Naive thymus-derived CD4-positive, alpha-beta T cell (primary cell): ENCODE measurements at regions of chr10 and their contacts with region 1.

Region 1: GRCh38 chr10:77641788-77642397 is 4.3 kb upstream of the KCNMA1 start:
- DNase-seq: peak in 8 of 9 donors; percentile 3 to 45 (median 28)
- ATAC-seq: no peak
- H3K4me3 ChIP-seq: no peak overlapping the region
- H3K4me3 Mint-ChIP-seq: no peak overlapping the region
- H3K27ac ChIP-seq: no peak overlapping the region
- H3K27ac Mint-ChIP-seq: no peak overlapping the region
- H3K4me1 ChIP-seq: peaks cover 0 to 4% of the 10 kb centered on the region in 2 donors
- H3K4me1 Mint-ChIP-seq: peaks cover 0 to 17% (median 8%) of the 10 kb centered on the region in 7 donors
- H3K27me3 ChIP-seq: peaks cover 0 to 5% of the 10 kb centered on the region in 2 donors
- H3K27me3 Mint-ChIP-seq: peaks cover 34 to 51% (median 45%) of the 10 kb centered on the region in 5 donors

Region 2: GRCh38 chr10:77165445-77166208 is 476.3 kb before region 1 on chr10:
- CTCF ChIA-PET with region 1: interaction called, 4 read pairs
- POLR2A ChIA-PET with region 1: no interaction called
- intact Hi-C with region 1: loop called (anchors 1 kb)
- DNase-seq: peak in 6 of 9 donors; percentile 22 to 34 (median 28)
- ATAC-seq: peak; percentile 60
- H3K4me3 ChIP-seq: no peak overlapping the region
- H3K4me3 Mint-ChIP-seq: peak overlapping the region in 7 of 10 donors; percentile 7 to 73 (median 62)
- H3K27ac ChIP-seq: no peak overlapping the region
- H3K27ac Mint-ChIP-seq: no peak overlapping the region
- H3K4me1 ChIP-seq: no peaks in the 10 kb centered on the region
- H3K4me1 Mint-ChIP-seq: peaks cover 0 to 5% (median 3%) of the 10 kb centered on the region in 7 donors
- H3K27me3 ChIP-seq: no peaks in the 10 kb centered on the region
- H3K27me3 Mint-ChIP-seq: peaks cover 24 to 44% (median 39%) of the 10 kb centered on the region in 5 donors

Region 3: DNA sequence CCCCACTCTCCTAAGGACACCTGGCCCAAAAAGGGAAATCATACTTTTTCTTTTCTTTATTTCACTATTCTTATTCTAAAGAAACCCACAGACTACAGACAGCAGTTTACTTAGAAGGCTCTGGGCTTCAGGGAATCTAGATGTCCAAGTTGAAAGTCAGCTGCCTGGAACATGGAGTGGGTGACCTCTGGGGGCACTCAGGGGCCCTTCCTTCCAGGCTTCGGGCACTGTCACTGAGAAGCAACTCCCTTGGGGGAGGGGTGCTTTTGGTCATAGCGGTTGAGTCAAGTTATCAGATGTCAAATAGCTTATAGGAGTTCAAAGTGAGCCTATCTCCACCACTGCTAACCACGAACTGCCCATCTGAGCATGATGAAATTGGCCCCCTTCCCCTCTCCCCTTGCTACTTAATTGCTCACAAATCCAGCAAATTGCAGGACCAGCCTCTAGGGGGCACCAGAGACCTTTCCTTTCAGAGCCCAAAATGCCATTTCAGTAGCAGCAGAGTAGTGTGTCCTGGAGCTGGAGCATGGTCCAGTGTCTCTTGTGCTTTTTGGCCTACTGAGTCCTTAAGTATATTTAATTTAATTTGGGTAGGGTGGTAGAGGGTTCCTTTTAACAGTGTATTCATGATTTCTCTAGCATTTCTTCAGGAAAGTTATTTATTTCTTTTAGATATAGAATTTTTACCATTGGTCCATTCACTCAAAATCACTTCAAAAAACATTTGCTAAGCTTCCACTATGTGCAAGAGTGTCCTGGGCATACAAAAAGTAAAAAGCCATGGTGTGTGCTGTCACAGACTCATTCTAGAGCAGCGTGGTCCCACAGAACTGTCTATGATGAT is 468.1 kb before region 1 on chr10:
- CTCF ChIA-PET with region 1: interaction called, 7 read pairs
- POLR2A ChIA-PET with region 1: no interaction called
- intact Hi-C with region 1: loop called in 1 of 2 experiments (anchors 1 kb)
- DNase-seq: peak in 8 of 9 donors; percentile 19 to 50 (median 38)
- ATAC-seq: peak; percentile 68
- H3K4me3 ChIP-seq: no peak overlapping the region
- H3K4me3 Mint-ChIP-seq: no peak overlapping the region
- H3K27ac ChIP-seq: no peak overlapping the region
- H3K27ac Mint-ChIP-seq: no peak overlapping the region
- H3K4me1 ChIP-seq: no peaks in the 10 kb centered on the region
- H3K4me1 Mint-ChIP-seq: no peaks in the 10 kb centered on the region
- H3K27me3 ChIP-seq: no peaks in the 10 kb centered on the region
- H3K27me3 Mint-ChIP-seq: peaks cover 3 to 32% (median 12%) of the 10 kb centered on the region in 5 donors

Region 4: GRCh38 chr10:77251297-77252013 is 390.4 kb before region 1 on chr10:
- CTCF ChIA-PET with region 1: no interaction called
- POLR2A ChIA-PET with region 1: no interaction called
- intact Hi-C with region 1: loop called in 1 of 2 experiments (anchors 5 kb)
- DNase-seq: no peak
- ATAC-seq: no peak
- H3K4me3 ChIP-seq: no peak overlapping the region
- H3K4me3 Mint-ChIP-seq: no peak overlapping the region
- H3K27ac ChIP-seq: no peak overlapping the region
- H3K27ac Mint-ChIP-seq: no peak overlapping the region
- H3K4me1 ChIP-seq: peaks cover 0 to 6% of the 10 kb centered on the region in 2 donors
- H3K4me1 Mint-ChIP-seq: peaks cover 0 to 4% (median 0%) of the 10 kb centered on the region in 7 donors
- H3K27me3 ChIP-seq: no peaks in the 10 kb centered on the region
- H3K27me3 Mint-ChIP-seq: peaks cover 0 to 21% (median 2%) of the 10 kb centered on the region in 5 donors

Region 5: GRCh38 chr10:77391605-77392235 is 250.2 kb before region 1 on chr10:
- CTCF ChIA-PET with region 1: no interaction called
- POLR2A ChIA-PET with region 1: no interaction called
- intact Hi-C with region 1: loop called in 1 of 2 experiments (anchors 5 kb)
- DNase-seq: peak in 1 of 9 donors; percentile 34
- ATAC-seq: no peak
- H3K4me3 ChIP-seq: no peak overlapping the region
- H3K4me3 Mint-ChIP-seq: no peak overlapping the region
- H3K27ac ChIP-seq: no peak overlapping the region
- H3K27ac Mint-ChIP-seq: no peak overlapping the region
- H3K4me1 ChIP-seq: no peaks in the 10 kb centered on the region
- H3K4me1 Mint-ChIP-seq: peaks cover 0 to 3% (median 0%) of the 10 kb centered on the region in 7 donors
- H3K27me3 ChIP-seq: no peaks in the 10 kb centered on the region
- H3K27me3 Mint-ChIP-seq: peaks cover 0 to 11% (median 7%) of the 10 kb centered on the region in 5 donors

Region 6: GRCh38 chr10:77685432-77685831 is 43.5 kb after region 1 on chr10:
- CTCF ChIA-PET with region 1: no interaction called
- POLR2A ChIA-PET with region 1: no interaction called
- intact Hi-C with region 1: no loop called
- DNase-seq: no peak
- ATAC-seq: no peak
- H3K4me3 ChIP-seq: no peak overlapping the region
- H3K4me3 Mint-ChIP-seq: no peak overlapping the region
- H3K27ac ChIP-seq: no peak overlapping the region
- H3K27ac Mint-ChIP-seq: no peak overlapping the region
- H3K4me1 ChIP-seq: no peaks in the 10 kb centered on the region
- H3K4me1 Mint-ChIP-seq: no peaks in the 10 kb centered on the region
- H3K27me3 ChIP-seq: no peaks in the 10 kb centered on the region
- H3K27me3 Mint-ChIP-seq: peaks cover 1 to 50% (median 34%) of the 10 kb centered on the region in 5 donors

Region 7: GRCh38 chr10:77873536-77874380 is 231.9 kb after region 1 on chr10:
- CTCF ChIA-PET with region 1: no interaction called
- POLR2A ChIA-PET with region 1: no interaction called
- intact Hi-C with region 1: no loop called
- DNase-seq: peak in 2 of 9 donors; percentile 4 to 30
- ATAC-seq: peak; percentile 57
- H3K4me3 ChIP-seq: no peak overlapping the region
- H3K4me3 Mint-ChIP-seq: peak overlapping the region in 3 of 10 donors; percentile 17 to 42 (median 40)
- H3K27ac ChIP-seq: no peak overlapping the region
- H3K27ac Mint-ChIP-seq: peak overlapping the region in 2 of 9 donors; percentile 17 to 76
- H3K4me1 ChIP-seq: peaks cover 0 to 21% of the 10 kb centered on the region in 2 donors
- H3K4me1 Mint-ChIP-seq: peaks cover 0 to 40% (median 6%) of the 10 kb centered on the region in 7 donors
- H3K27me3 ChIP-seq: no peaks in the 10 kb centered on the region
- H3K27me3 Mint-ChIP-seq: peaks cover 0 to 3% (median 0%) of the 10 kb centered on the region in 5 donors